AG04450 (cell line): ENCODE measurements at regions of chr18 and their contacts with region 1.

Region 1: GRCh38 chr18:37084890-37085289 is 256.0 kb downstream of the KIAA1328 start:
- DNase-seq: no peak
- H3K4me3 ChIP-seq: no peak overlapping the region
- H3K27ac ChIP-seq: no peak overlapping the region
- H3K27me3 ChIP-seq: no peaks in the 10 kb centered on the region
- CTCF ChIP-seq: no peak

Region 2: DNA sequence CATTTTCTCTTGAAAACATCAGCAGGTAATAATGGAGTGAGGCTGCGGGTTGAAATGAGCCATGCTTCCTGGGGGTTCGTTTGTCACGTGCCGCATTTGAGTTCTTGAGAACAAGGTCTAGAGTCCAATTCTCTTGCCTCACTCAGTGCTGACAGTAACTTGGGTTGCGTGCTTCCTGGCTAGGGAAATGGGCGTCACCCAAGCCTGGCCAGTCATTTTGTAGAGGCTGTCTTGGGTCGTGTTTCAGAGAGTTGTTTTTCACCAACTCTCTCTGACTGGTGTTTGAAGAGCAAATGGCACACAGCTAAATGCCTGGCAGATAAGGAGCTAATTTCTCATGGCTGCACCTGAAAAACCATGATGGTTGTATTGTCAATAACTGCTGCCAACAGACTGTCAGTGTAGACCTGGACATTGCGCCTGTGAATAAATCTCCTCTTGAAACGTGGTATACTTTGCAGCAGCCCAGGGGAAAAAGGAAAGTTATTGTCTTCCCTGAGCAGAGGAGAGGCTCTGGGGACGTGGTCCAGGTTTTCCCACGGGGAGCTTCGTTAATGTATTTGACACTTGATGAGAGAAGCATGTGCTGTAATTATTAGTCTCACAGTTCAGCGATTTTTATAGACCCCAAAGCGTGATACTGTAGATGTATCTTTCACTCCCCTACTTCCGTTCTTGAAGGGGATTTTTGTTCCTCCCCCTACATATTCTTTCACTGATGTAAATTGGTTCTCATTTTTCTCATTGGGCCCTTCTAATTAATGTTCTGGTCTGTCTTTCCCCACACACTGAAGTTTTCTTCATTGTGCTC is 591.3 kb before region 1 on chr18:
- CTCF ChIA-PET with region 1: interaction called, 10 read pairs
- POLR2A ChIA-PET with region 1: no interaction called
- DNase-seq: no peak
- H3K4me3 ChIP-seq: no peak overlapping the region
- H3K27ac ChIP-seq: no peak overlapping the region
- H3K27me3 ChIP-seq: no peaks in the 10 kb centered on the region
- CTCF ChIP-seq: no peak

Region 3: GRCh38 chr18:36947821-36948348 is 137.0 kb before region 1 on chr18:
- CTCF ChIA-PET with region 1: no interaction called
- POLR2A ChIA-PET with region 1: no interaction called
- DNase-seq: no peak
- H3K4me3 ChIP-seq: no peak overlapping the region
- H3K27ac ChIP-seq: no peak overlapping the region
- H3K27me3 ChIP-seq: no peaks in the 10 kb centered on the region
- CTCF ChIP-seq: no peak